ENCODE measurements at regions of chr10 and their contacts with region 1.

Region 1: GRCh38 chr10:21926949-21927348 is 76.6 kb downstream of the DNAJC1 start:
- DNase-seq: peak; percentile 61
- H3K4me3 Mint-ChIP-seq: no peak overlapping the region
- H3K27ac Mint-ChIP-seq: peak overlapping the region; percentile 29
- H3K4me1 Mint-ChIP-seq: peaks cover 17% of the 10 kb centered on the region
- H3K27me3 Mint-ChIP-seq: no peaks in the 10 kb centered on the region
- CTCF ChIP-seq: no peak

Region 2: DNA sequence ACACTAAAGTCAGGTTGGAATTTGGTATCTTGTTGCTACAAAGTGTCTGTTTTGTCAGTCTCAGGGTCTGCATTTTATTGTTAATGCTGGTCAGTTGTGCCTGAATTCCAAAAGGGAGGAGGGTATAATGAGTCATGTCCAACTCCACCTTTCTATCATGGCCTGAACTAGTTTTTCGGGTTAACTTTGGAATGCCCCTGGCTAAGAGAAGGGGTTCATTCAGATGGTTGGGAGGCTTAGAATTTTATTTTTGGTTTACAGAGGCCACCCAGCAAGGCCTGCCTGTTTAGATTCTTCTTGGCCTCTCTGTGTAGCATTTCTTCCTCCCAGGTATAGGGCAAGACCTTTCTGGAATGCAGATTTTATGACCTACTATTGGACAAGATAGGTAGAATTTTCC is 494.7 kb before region 1 on chr10:
- CTCF ChIA-PET with region 1: no interaction called
- intact Hi-C with region 1: no loop called
- DNase-seq: no peak
- H3K4me3 Mint-ChIP-seq: no peak overlapping the region
- H3K27ac Mint-ChIP-seq: no peak overlapping the region
- H3K4me1 Mint-ChIP-seq: no peaks in the 10 kb centered on the region
- H3K27me3 Mint-ChIP-seq: peaks cover 10% of the 10 kb centered on the region
- CTCF ChIP-seq: no peak

Region 3: GRCh38 chr10:21724695-21725367 is 202.1 kb before region 1 on chr10:
- CTCF ChIA-PET with region 1: no interaction called
- intact Hi-C with region 1: loop called (anchors 5 kb)
- DNase-seq: peak; percentile 90
- H3K4me3 Mint-ChIP-seq: no peak overlapping the region
- H3K27ac Mint-ChIP-seq: peak overlapping the region; percentile 27
- H3K4me1 Mint-ChIP-seq: peaks cover 27% of the 10 kb centered on the region
- H3K27me3 Mint-ChIP-seq: no peaks in the 10 kb centered on the region
- CTCF ChIP-seq: no peak

Region 4: DNA sequence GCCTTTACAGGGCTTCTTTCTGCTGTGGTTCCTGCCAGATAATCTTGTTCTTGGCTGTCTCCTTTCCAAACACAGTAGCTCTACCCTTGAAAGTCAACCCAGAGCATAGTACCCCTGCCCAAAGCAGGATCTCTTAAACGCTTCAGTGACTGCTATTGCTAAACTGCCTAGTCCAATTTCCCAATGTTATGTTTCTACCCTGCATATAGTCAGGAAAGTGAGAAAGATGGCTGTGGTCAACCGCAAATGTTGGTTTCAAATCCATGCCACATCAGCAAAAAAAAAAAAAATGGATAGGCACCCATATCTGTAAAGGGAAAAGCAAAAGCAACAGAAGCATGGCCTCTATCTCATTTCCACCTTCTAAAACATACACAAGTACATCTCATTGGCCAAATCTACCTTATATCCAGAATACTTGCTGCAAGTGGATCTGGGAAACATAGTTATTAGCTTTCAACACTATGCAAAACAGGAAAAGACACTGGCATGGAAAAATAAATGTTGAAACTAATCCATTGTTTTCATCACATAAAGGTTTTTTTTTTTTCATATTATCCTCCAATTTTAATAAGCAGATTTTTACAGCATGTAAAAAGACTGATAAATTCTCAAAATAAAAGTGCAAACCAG is 16.8 kb after region 1 on chr10:
- CTCF ChIA-PET with region 1: no interaction called
- intact Hi-C with region 1: loop called (anchors 2 kb)
- DNase-seq: no peak
- H3K4me3 Mint-ChIP-seq: no peak overlapping the region
- H3K27ac Mint-ChIP-seq: no peak overlapping the region
- H3K4me1 Mint-ChIP-seq: no peaks in the 10 kb centered on the region
- H3K27me3 Mint-ChIP-seq: no peaks in the 10 kb centered on the region
- CTCF ChIP-seq: no peak

Measured in Calu3 (cell line).